ENCODE measurements at regions of chr10 and their contacts with region 1.

Region 1: GRCh38 chr10:46284293-46285229 is 2.2 kb upstream of the ANTXRL start:
- DNase-seq: peak; percentile 83
- H3K4me3 Mint-ChIP-seq: peak overlapping the region; percentile 82
- H3K27ac Mint-ChIP-seq: peak overlapping the region; percentile 56
- H3K4me1 Mint-ChIP-seq: peaks cover 33% of the 10 kb centered on the region
- H3K27me3 Mint-ChIP-seq: peaks cover 20% of the 10 kb centered on the region

Region 2: DNA sequence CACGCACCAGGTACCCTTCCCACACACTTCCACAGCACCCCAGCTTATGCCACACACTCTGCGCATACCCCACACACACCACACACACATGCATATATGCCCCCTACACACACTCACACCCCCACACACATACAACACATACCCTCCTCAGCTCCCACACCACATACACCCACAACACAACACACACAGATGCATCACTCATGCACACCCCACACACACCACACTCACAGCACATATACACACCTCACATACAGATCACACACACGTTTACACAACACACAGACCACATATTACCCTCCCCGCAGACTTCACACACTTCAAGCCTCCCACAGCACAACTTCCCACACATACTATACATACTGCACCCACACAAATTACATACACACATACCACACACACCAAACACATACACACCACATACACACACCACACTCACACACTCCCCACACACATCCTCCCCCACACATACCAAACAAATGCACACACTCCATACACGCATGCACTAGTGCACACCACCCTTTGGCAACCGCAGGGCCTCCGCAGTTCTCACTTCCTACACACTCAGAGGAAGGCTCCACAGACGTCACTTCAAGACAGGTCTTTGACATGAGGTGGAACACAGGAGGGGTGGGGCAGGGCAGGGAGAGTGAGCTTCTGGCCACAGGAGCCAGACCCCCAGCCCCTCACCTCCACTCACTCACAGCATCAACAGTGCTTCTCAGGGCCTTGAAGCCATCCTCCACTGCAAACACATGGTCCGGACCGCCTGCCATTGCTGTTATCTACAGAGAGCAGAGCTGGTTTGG is 16.3 kb before region 1 on chr10:
- intact Hi-C with region 1: loop called (anchors 1 kb)
- DNase-seq: peak; percentile 34
- H3K4me3 Mint-ChIP-seq: no peak overlapping the region
- H3K27ac Mint-ChIP-seq: no peak overlapping the region
- H3K4me1 Mint-ChIP-seq: peaks cover 26% of the 10 kb centered on the region
- H3K27me3 Mint-ChIP-seq: no peaks in the 10 kb centered on the region

Region 3: GRCh38 chr10:46299536-46300369 is 15.2 kb after region 1 on chr10:
- intact Hi-C with region 1: no loop called
- DNase-seq: no peak
- H3K4me3 Mint-ChIP-seq: no peak overlapping the region
- H3K27ac Mint-ChIP-seq: no peak overlapping the region
- H3K4me1 Mint-ChIP-seq: peaks cover 17% of the 10 kb centered on the region
- H3K27me3 Mint-ChIP-seq: peaks cover 1% of the 10 kb centered on the region

Measured in activated T-helper 1 cell treated with anti-CD3 and anti-CD28 coated beads, Interleukin-12 subunit alpha, Interleukin-12 subunit beta, Interleukin-2, Interleukin-4 antibody, amounts not matched to agents 30 ng/mL and 10 ng/mL and 1 ng/mL, durations not matched to agents 14 hours and 24 hours and 36 hours (primary cell).